Caco-2 (cell line): ENCODE measurements at regions of chr13 and their contacts with region 1.

Region 1: GRCh38 chr13:81171065-81171647 is 830.2 kb upstream of the SPRY2 start:
- DNase-seq: peak in 1 of 2 experiments; percentile 25
- H3K4me3 ChIP-seq: no peak overlapping the region
- H3K4me3 Mint-ChIP-seq: no peak overlapping the region
- H3K27ac Mint-ChIP-seq: no peak overlapping the region
- H3K4me1 ChIP-seq: no peaks in the 10 kb centered on the region; the same call in 1 of the 2 replicates
- H3K4me1 Mint-ChIP-seq: no peaks in the 10 kb centered on the region
- H3K27me3 ChIP-seq: no peaks in the 10 kb centered on the region
- H3K27me3 Mint-ChIP-seq: no peaks in the 10 kb centered on the region
- CTCF ChIP-seq: peak; percentile 51 to 72

Region 2: DNA sequence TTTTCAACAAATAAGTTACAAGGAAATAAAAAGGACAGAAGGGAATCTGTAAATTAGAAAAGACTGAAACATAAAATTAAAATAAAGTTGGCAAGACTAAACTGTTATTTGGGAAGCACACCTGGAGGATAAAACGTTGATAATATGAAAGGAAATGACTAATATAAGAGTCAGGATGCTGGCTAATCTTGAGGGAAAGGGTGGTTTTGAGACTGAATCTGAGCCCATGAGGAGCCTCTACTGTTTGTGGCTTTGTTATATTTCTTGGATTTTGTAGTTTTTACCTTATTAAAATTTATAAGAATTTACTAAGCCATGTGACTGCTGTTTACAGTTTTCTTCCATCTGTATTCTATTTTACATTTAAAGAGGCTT is 112.3 kb before region 1 on chr13:
- CTCF ChIA-PET with region 1: no interaction called
- POLR2A ChIA-PET with region 1: no interaction called
- intact Hi-C with region 1: loop called (anchors 1 kb)
- DNase-seq: no peak
- H3K4me3 ChIP-seq: no peak overlapping the region
- H3K4me3 Mint-ChIP-seq: no peak overlapping the region
- H3K27ac Mint-ChIP-seq: no peak overlapping the region
- H3K4me1 ChIP-seq: peaks cover 9% of the 10 kb centered on the region
- H3K4me1 Mint-ChIP-seq: peaks cover 13% of the 10 kb centered on the region
- H3K27me3 ChIP-seq: no peaks in the 10 kb centered on the region
- H3K27me3 Mint-ChIP-seq: no peaks in the 10 kb centered on the region
- CTCF ChIP-seq: no peak

Region 3: GRCh38 chr13:81194362-81194761 is 23.2 kb after region 1 on chr13:
- CTCF ChIA-PET with region 1: no interaction called
- POLR2A ChIA-PET with region 1: no interaction called
- intact Hi-C with region 1: no loop called
- DNase-seq: no peak
- H3K4me3 ChIP-seq: no peak overlapping the region
- H3K4me3 Mint-ChIP-seq: no peak overlapping the region
- H3K27ac Mint-ChIP-seq: no peak overlapping the region
- H3K4me1 ChIP-seq: no peaks in the 10 kb centered on the region
- H3K4me1 Mint-ChIP-seq: no peaks in the 10 kb centered on the region
- H3K27me3 ChIP-seq: no peaks in the 10 kb centered on the region
- H3K27me3 Mint-ChIP-seq: no peaks in the 10 kb centered on the region
- CTCF ChIP-seq: no peak

Region 4: GRCh38 chr13:81480634-81481033 is 309.5 kb after region 1 on chr13:
- CTCF ChIA-PET with region 1: interaction called, 9 read pairs
- POLR2A ChIA-PET with region 1: no interaction called
- intact Hi-C with region 1: loop called (anchors 1 kb)
- DNase-seq: no peak
- H3K4me3 ChIP-seq: no peak overlapping the region
- H3K4me3 Mint-ChIP-seq: no peak overlapping the region
- H3K27ac Mint-ChIP-seq: no peak overlapping the region
- H3K4me1 ChIP-seq: no peaks in the 10 kb centered on the region
- H3K4me1 Mint-ChIP-seq: no peaks in the 10 kb centered on the region
- H3K27me3 ChIP-seq: no peaks in the 10 kb centered on the region
- H3K27me3 Mint-ChIP-seq: no peaks in the 10 kb centered on the region
- CTCF ChIP-seq: peak in 1 of 2 experiments; percentile 33

Region 5: DNA sequence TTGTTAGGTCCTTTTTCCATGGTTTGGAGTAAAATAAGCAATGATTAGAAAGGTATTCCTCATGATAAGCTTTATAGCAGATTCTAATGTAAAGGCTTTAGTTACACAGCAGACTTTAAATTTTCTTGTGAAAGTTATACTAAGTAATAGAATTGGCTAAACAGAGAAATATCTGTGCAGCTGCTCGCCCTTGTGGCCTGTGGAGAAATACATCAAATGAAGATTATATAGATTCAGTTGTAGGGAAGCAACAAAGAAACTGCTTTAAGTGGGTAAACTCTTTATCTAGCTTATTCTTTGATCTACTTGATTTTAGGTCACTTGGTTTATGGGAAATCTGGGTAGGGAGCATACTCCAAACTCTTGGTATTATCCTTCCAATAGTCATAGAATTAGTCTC is 439.5 kb after region 1 on chr13:
- CTCF ChIA-PET with region 1: no interaction called
- POLR2A ChIA-PET with region 1: no interaction called
- intact Hi-C with region 1: loop called (anchors 1 kb)
- DNase-seq: no peak
- H3K4me3 ChIP-seq: no peak overlapping the region
- H3K4me3 Mint-ChIP-seq: no peak overlapping the region
- H3K27ac Mint-ChIP-seq: no peak overlapping the region
- H3K4me1 ChIP-seq: no peaks in the 10 kb centered on the region
- H3K4me1 Mint-ChIP-seq: no peaks in the 10 kb centered on the region
- H3K27me3 ChIP-seq: no peaks in the 10 kb centered on the region
- H3K27me3 Mint-ChIP-seq: no peaks in the 10 kb centered on the region
- CTCF ChIP-seq: no peak

Region 6: DNA sequence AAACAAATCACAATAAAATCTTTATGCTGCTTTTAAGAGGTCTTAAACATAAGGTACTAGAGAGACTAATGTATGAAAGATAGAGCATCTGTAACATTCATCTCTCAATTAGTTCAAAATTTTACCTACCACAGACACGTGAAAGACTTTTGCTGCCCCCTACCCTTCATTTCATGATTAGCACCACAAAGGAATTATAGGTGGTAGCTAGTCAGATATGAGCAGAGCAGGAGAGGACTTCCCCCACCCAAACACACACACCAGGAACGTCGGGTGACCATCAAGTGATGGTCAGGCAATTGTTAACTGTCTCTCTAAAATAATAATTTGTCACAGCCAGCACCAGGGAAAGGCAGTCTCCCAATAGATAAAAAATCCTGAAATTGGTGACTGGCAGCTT is 701.4 kb after region 1 on chr13:
- CTCF ChIA-PET with region 1: no interaction called
- POLR2A ChIA-PET with region 1: no interaction called
- intact Hi-C with region 1: loop called (anchors 1 kb)
- DNase-seq: peak in 1 of 2 experiments; percentile 53
- H3K4me3 ChIP-seq: no peak overlapping the region
- H3K4me3 Mint-ChIP-seq: no peak overlapping the region
- H3K27ac Mint-ChIP-seq: no peak overlapping the region
- H3K4me1 ChIP-seq: no peaks in the 10 kb centered on the region
- H3K4me1 Mint-ChIP-seq: peaks cover 6% of the 10 kb centered on the region
- H3K27me3 ChIP-seq: no peaks in the 10 kb centered on the region
- H3K27me3 Mint-ChIP-seq: peaks cover 3% of the 10 kb centered on the region
- CTCF ChIP-seq: peak; percentile 32 to 36